Naive thymus-derived CD4-positive, alpha-beta T cell (primary cell): ENCODE measurements at regions of chr4 and their contacts with region 1.

Region 1: DNA sequence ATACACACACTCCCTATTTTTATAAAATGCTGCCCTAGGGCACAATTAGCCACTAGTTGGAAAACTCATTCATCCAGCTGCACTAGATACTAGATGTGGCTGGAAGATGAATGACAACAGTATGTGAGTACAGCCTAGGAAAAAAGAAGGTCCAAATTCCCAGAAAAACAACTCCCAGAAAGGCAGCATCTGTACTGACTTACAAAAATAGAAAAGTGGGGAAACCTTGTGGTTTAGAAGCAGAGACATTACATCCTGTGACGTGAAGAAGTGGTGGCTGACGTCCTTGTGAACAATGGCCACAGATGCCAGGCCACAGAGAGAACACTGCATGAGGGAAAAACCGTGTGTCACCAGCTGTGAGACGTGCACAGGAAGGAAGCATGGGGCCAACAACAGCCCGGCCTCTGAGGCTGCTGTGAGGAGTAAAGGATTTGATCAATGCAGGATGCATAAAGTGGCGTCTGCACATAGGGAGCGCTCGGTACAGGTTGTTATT is 81.2 kb downstream of the SPRY1 start:
- DNase-seq: peak in 8 of 9 donors; percentile 10 to 52 (median 32)
- ATAC-seq: peak; percentile 88
- H3K4me3 ChIP-seq: no peak overlapping the region
- H3K4me3 Mint-ChIP-seq: peak overlapping the region in 1 of 10 donors; percentile 71
- H3K27ac ChIP-seq: no peak overlapping the region
- H3K27ac Mint-ChIP-seq: peak overlapping the region in 2 of 9 donors; percentile 48 to 76
- H3K4me1 ChIP-seq: peaks cover 0 to 5% of the 10 kb centered on the region in 2 donors
- H3K4me1 Mint-ChIP-seq: peaks cover 7 to 39% (median 17%) of the 10 kb centered on the region in 7 donors
- H3K27me3 ChIP-seq: no peaks in the 10 kb centered on the region
- H3K27me3 Mint-ChIP-seq: peaks cover 0 to 10% (median 0%) of the 10 kb centered on the region in 5 donors

Region 2: GRCh38 chr4:123168812-123169211 is 308.9 kb before region 1 on chr4:
- CTCF ChIA-PET with region 1: no interaction called
- POLR2A ChIA-PET with region 1: no interaction called
- intact Hi-C with region 1: no loop called
- DNase-seq: no peak
- ATAC-seq: no peak
- H3K4me3 ChIP-seq: no peak overlapping the region
- H3K4me3 Mint-ChIP-seq: no peak overlapping the region
- H3K27ac ChIP-seq: no peak overlapping the region
- H3K27ac Mint-ChIP-seq: no peak overlapping the region
- H3K4me1 ChIP-seq: no peaks in the 10 kb centered on the region
- H3K4me1 Mint-ChIP-seq: peaks cover 0 to 2% (median 0%) of the 10 kb centered on the region in 7 donors
- H3K27me3 ChIP-seq: no peaks in the 10 kb centered on the region
- H3K27me3 Mint-ChIP-seq: no peaks in the 10 kb centered on the region

Region 3: DNA sequence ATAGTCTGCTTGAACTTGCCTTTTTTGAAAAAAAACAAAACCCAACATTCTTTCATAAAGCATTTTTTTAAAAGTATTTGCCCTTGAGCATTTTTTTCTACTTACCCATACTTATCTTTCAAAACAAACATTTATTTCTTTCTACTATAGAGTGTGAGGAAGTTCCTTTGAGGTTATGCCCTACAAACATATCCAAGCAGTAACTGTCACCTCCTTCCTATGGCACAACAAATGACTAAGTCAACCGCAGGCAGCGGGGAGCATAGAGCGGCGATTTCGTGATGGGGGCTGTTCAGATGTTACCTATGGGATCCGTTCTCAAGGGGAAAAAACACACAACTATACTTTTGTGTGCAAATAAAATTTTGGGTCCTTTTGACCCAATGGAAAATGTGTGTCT is 61.8 kb before region 1 on chr4:
- CTCF ChIA-PET with region 1: no interaction called
- POLR2A ChIA-PET with region 1: no interaction called
- intact Hi-C with region 1: loop called in 1 of 2 experiments (anchors 2 kb)
- DNase-seq: peak in 1 of 9 donors; percentile 61
- ATAC-seq: peak; percentile 90
- H3K4me3 ChIP-seq: no peak overlapping the region
- H3K4me3 Mint-ChIP-seq: peak overlapping the region in 1 of 10 donors; percentile 59
- H3K27ac ChIP-seq: no peak overlapping the region
- H3K27ac Mint-ChIP-seq: peak overlapping the region in 1 of 9 donors; percentile 80
- H3K4me1 ChIP-seq: no peaks in the 10 kb centered on the region
- H3K4me1 Mint-ChIP-seq: peaks cover 0 to 74% (median 8%) of the 10 kb centered on the region in 7 donors
- H3K27me3 ChIP-seq: no peaks in the 10 kb centered on the region
- H3K27me3 Mint-ChIP-seq: peaks cover 0 to 12% (median 0%) of the 10 kb centered on the region in 5 donors

Region 4: GRCh38 chr4:123421937-123422781 is 55.6 kb before region 1 on chr4:
- CTCF ChIA-PET with region 1: no interaction called
- POLR2A ChIA-PET with region 1: no interaction called
- intact Hi-C with region 1: loop called in 1 of 2 experiments (anchors 2 kb)
- DNase-seq: no peak
- ATAC-seq: peak; percentile 49
- H3K4me3 ChIP-seq: peak overlapping the region; percentile 14
- H3K4me3 Mint-ChIP-seq: peak overlapping the region; percentile 35 to 86 (median 72)
- H3K27ac ChIP-seq: peak overlapping the region; percentile 58
- H3K27ac Mint-ChIP-seq: peak overlapping the region in 6 of 9 donors; percentile 32 to 95 (median 63)
- H3K4me1 ChIP-seq: no peaks in the 10 kb centered on the region
- H3K4me1 Mint-ChIP-seq: peaks cover 5 to 66% (median 12%) of the 10 kb centered on the region in 7 donors
- H3K27me3 ChIP-seq: no peaks in the 10 kb centered on the region
- H3K27me3 Mint-ChIP-seq: peaks cover 0 to 8% (median 0%) of the 10 kb centered on the region in 5 donors

Region 5: GRCh38 chr4:123444290-123444731 is 33.4 kb before region 1 on chr4:
- CTCF ChIA-PET with region 1: no interaction called
- POLR2A ChIA-PET with region 1: no interaction called
- intact Hi-C with region 1: loop called in 1 of 2 experiments (anchors 2 kb)
- DNase-seq: peak in 6 of 9 donors; percentile 1 to 48 (median 10)
- ATAC-seq: peak; percentile 81
- H3K4me3 ChIP-seq: peak overlapping the region; percentile 13
- H3K4me3 Mint-ChIP-seq: peak overlapping the region; percentile 41 to 82 (median 62)
- H3K27ac ChIP-seq: no peak overlapping the region
- H3K27ac Mint-ChIP-seq: peak overlapping the region in 6 of 9 donors; percentile 4 to 82 (median 41)
- H3K4me1 ChIP-seq: peaks cover 0 to 6% of the 10 kb centered on the region in 2 donors
- H3K4me1 Mint-ChIP-seq: peaks cover 7 to 28% (median 17%) of the 10 kb centered on the region in 7 donors
- H3K27me3 ChIP-seq: no peaks in the 10 kb centered on the region
- H3K27me3 Mint-ChIP-seq: peaks cover 0 to 2% (median 0%) of the 10 kb centered on the region in 5 donors